HEK293T (cell line): ENCODE measurements at regions of chr6 and their contacts with region 1.

Region 1: GRCh38 chr6:73461537-73462350 is at the start of gene MTO1:
- DNase-seq: peak; percentile 86

Region 2: GRCh38 chr6:73388800-73389512 is 72.8 kb before region 1 on chr6:
- CTCF ChIA-PET with region 1: no interaction called
- POLR2A ChIA-PET with region 1: interaction called, 10 read pairs
- DNase-seq: peak; percentile 76

Region 3: GRCh38 chr6:73471686-73472290 is 10.0 kb after region 1 on chr6:
- CTCF ChIA-PET with region 1: no interaction called
- POLR2A ChIA-PET with region 1: interaction called, 14 read pairs
- DNase-seq: no peak

Region 4: GRCh38 chr6:73484438-73484837 is 22.7 kb after region 1 on chr6:
- CTCF ChIA-PET with region 1: interaction called, 4 read pairs
- POLR2A ChIA-PET with region 1: interaction called, 14 read pairs
- DNase-seq: no peak

Region 5: DNA sequence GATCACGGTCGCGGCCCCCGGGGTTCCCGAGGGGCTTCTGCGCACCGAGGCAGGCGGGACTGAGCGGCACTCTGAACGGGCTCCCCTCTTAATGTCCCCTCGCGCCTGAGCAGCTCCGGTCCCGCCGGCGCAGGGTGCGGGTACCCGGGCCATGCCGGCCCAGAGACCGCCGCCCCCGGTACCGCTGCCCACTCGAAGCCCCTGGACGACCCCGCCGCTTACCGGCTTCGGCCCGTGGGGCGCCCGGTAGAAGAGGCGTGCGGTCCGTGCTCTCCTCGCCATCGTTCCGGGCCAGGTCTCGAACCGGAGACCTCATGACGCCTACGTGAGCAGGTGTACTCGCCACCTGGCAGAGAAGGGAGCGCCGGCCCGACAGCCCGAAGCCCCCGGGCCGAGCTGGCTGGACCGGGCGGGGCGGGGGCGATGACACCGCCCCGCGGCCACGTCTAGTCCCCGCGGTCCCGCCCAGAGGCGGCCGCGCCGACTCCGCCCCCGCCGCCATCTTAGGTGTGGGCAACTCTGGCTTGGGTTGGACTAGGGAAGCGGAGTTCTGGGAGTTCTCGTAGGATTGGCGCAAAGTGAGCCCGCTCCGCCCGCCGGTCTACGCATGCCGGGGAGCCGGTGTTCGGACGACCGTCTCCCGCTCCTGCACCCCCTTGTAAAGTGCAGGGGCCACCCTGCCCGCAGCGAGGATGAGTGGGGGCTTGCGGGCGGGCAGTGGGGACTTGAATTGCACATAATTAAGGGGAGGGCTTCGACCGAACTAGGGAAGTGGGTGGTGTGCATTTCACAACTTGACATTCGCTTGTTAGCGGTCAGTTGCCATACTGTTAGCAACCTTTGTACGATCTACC is 192.1 kb after region 1 on chr6 and contains the start of gene SLC17A5:
- CTCF ChIA-PET with region 1: interaction called, 3 read pairs
- POLR2A ChIA-PET with region 1: interaction called, 13 read pairs
- DNase-seq: peak; percentile 91